Natural killer cell (primary cell): ENCODE measurements at regions of chr13 and their contacts with region 1.

Region 1: GRCh38 chr13:44435142-44435982 is 61.7 kb downstream of the SERP2 start:
- DNase-seq: peak; percentile 86 to 94
- ATAC-seq: peak; percentile 87 to 95 (median 89)
- H3K4me3 ChIP-seq: peak overlapping the region; percentile 75
- H3K4me3 Mint-ChIP-seq: peak overlapping the region; percentile 92
- H3K27ac ChIP-seq: peak overlapping the region; percentile 87
- H3K27ac Mint-ChIP-seq: peak overlapping the region; percentile 86 to 94
- H3K4me1 ChIP-seq: peaks cover 21% of the 10 kb centered on the region
- H3K4me1 Mint-ChIP-seq: peaks cover 33 to 35% of the 10 kb centered on the region in 2 donors
- H3K27me3 ChIP-seq: no peaks in the 10 kb centered on the region
- H3K27me3 Mint-ChIP-seq: no peaks in the 10 kb centered on the region
- CTCF ChIP-seq: no peak

Region 2: DNA sequence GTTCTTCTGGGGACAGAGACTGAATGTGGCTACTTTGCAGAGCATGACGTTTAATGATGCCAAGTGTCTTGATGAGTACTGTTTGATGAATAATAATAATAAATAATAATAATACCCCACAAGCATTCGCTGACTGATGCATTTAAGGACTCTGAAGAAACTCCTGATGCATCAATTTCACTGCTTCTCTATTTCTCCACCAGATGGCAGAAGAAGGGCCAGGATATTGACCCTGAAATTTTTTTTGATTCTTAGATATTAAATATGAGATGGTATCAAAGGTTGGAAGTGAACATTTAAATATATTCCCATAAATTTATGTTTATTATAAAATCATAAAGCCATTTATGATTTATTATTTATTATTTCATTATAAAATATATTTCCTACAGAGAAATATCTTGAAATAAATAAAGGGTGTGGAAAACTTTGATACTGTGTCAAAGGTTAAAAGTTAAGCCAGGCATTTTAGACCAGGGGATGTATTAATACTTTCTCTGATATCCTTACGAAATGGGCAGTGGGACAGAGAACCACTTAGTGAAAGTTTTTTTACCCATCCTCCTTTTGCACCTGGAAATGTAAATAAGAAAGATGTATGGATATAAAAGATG is 384.8 kb before region 1 on chr13:
- intact Hi-C with region 1: loop called (anchors 1 kb)
- DNase-seq: peak in 1 of 2 donors; percentile 65
- ATAC-seq: peak; percentile 49 to 73 (median 55)
- H3K4me3 ChIP-seq: no peak overlapping the region
- H3K4me3 Mint-ChIP-seq: no peak overlapping the region
- H3K27ac ChIP-seq: no peak overlapping the region
- H3K27ac Mint-ChIP-seq: no peak overlapping the region
- H3K4me1 ChIP-seq: no peaks in the 10 kb centered on the region
- H3K4me1 Mint-ChIP-seq: peaks cover 5% of the 10 kb centered on the region in 2 donors
- H3K27me3 ChIP-seq: no peaks in the 10 kb centered on the region
- H3K27me3 Mint-ChIP-seq: peaks cover 39 to 41% of the 10 kb centered on the region in 2 donors
- CTCF ChIP-seq: peak; percentile 83

Region 3: DNA sequence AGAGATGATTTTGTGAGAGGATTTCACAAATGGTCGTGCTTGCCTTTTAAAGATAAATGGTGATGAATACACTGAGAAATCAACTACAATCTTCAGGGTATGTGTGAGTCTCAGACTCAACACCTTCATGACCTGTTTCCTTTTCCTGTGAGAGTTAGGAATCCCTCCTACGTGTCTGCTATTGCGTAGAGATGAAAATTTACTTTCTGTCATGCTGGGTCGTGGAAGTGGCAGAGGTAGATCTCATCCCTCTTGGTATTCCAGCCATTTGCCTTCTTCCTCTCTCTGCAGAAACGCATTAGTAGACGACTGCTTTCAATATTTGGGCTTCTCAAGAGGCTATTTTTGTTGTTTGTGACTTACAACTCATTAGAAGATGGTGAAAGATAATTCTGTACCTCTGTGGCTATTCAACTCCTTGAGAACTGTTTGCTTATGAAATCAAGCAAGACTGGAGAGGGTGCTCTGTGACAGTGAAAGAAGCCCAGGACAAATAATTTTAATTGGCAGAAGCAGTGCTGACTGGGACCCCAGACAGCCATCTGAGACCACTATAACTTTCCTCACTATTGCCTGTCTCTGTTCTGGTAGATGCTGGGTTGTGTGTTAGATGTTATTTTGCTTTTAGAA is 322.5 kb before region 1 on chr13:
- intact Hi-C with region 1: loop called (anchors 2 kb)
- DNase-seq: peak; percentile 19 to 62
- ATAC-seq: peak; percentile 81 to 85 (median 83)
- H3K4me3 ChIP-seq: no peak overlapping the region
- H3K4me3 Mint-ChIP-seq: peak overlapping the region; percentile 74
- H3K27ac ChIP-seq: peak overlapping the region; percentile 92
- H3K27ac Mint-ChIP-seq: peak overlapping the region; percentile 90 to 93
- H3K4me1 ChIP-seq: peaks cover 29% of the 10 kb centered on the region
- H3K4me1 Mint-ChIP-seq: peaks cover 45 to 48% of the 10 kb centered on the region in 2 donors
- H3K27me3 ChIP-seq: no peaks in the 10 kb centered on the region
- H3K27me3 Mint-ChIP-seq: no peaks in the 10 kb centered on the region
- CTCF ChIP-seq: no peak

Region 4: GRCh38 chr13:44191504-44192171 is 243.7 kb before region 1 on chr13:
- intact Hi-C with region 1: loop called (anchors 1 kb)
- DNase-seq: peak in 1 of 2 donors; percentile 76
- ATAC-seq: peak; percentile 53 to 86 (median 77)
- H3K4me3 ChIP-seq: no peak overlapping the region
- H3K4me3 Mint-ChIP-seq: no peak overlapping the region
- H3K27ac ChIP-seq: no peak overlapping the region
- H3K27ac Mint-ChIP-seq: peak overlapping the region in 1 of 2 donors; percentile 23
- H3K4me1 ChIP-seq: peaks cover 7% of the 10 kb centered on the region
- H3K4me1 Mint-ChIP-seq: peaks cover 13 to 14% of the 10 kb centered on the region in 2 donors
- H3K27me3 ChIP-seq: no peaks in the 10 kb centered on the region
- H3K27me3 Mint-ChIP-seq: peaks cover 0 to 2% of the 10 kb centered on the region in 2 donors
- CTCF ChIP-seq: peak; percentile 49

Region 5: GRCh38 chr13:44259045-44260027 is 176.0 kb before region 1 on chr13:
- intact Hi-C with region 1: loop called (anchors 1 kb)
- DNase-seq: peak; percentile 52 to 65
- ATAC-seq: peak; percentile 84 to 86 (median 85)
- H3K4me3 ChIP-seq: no peak overlapping the region
- H3K4me3 Mint-ChIP-seq: peak overlapping the region; percentile 62
- H3K27ac ChIP-seq: peak overlapping the region; percentile 60
- H3K27ac Mint-ChIP-seq: peak overlapping the region; percentile 64 to 87
- H3K4me1 ChIP-seq: peaks cover 12% of the 10 kb centered on the region
- H3K4me1 Mint-ChIP-seq: peaks cover 13 to 20% of the 10 kb centered on the region in 2 donors
- H3K27me3 ChIP-seq: no peaks in the 10 kb centered on the region
- H3K27me3 Mint-ChIP-seq: no peaks in the 10 kb centered on the region
- CTCF ChIP-seq: no peak

Region 6: DNA sequence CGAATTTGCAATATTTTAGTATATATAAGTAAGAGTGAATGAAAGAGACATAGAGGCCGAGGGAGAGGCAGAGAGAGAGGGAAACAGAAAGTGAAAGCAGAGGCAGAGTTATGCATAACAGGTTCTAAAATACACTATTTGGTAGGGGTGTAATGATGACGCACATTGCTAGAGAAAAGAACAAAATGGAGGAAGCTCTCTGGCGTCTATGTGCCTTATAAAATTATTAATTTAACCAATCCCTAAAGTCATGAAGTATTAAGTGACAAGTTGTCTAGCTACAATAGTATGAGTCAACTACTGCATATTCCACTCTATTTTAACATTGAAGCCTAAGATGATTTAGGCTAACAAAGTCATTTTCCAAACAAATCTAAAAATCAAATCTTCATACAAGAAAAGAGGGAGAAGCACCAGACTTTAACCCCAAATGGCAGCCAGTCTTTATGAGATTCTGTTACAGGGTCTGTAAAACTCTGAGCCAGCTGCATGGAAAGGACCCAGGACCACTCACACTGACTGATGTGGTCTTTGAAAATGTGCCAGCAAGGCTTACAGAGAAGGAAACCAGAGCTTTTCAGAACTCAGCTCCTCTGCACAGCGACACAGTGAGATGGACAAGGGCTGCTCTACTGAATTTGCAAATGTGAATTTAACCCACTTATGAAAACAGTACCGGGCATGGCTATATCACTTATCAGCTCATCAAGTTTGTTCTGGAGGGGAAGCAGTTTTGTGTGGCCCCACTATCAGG is 160.7 kb before region 1 on chr13:
- intact Hi-C with region 1: loop called (anchors 1 kb)
- DNase-seq: peak; percentile 22 to 87
- ATAC-seq: peak; percentile 96 to 98 (median 96)
- H3K4me3 ChIP-seq: peak overlapping the region; percentile 36
- H3K4me3 Mint-ChIP-seq: peak overlapping the region; percentile 74
- H3K27ac ChIP-seq: peak overlapping the region; percentile 91
- H3K27ac Mint-ChIP-seq: peak overlapping the region; percentile 75 to 90
- H3K4me1 ChIP-seq: peaks cover 12% of the 10 kb centered on the region
- H3K4me1 Mint-ChIP-seq: peaks cover 17 to 22% of the 10 kb centered on the region in 2 donors
- H3K27me3 ChIP-seq: no peaks in the 10 kb centered on the region
- H3K27me3 Mint-ChIP-seq: peaks cover 7 to 14% of the 10 kb centered on the region in 2 donors
- CTCF ChIP-seq: no peak

Region 7: GRCh38 chr13:45895881-45896280 is 1460.5 kb after region 1 on chr13:
- intact Hi-C with region 1: no loop called
- DNase-seq: no peak
- ATAC-seq: no peak
- H3K4me3 ChIP-seq: no peak overlapping the region
- H3K4me3 Mint-ChIP-seq: no peak overlapping the region
- H3K27ac ChIP-seq: no peak overlapping the region
- H3K27ac Mint-ChIP-seq: no peak overlapping the region
- H3K4me1 ChIP-seq: no peaks in the 10 kb centered on the region
- H3K4me1 Mint-ChIP-seq: no peaks in the 10 kb centered on the region
- H3K27me3 ChIP-seq: no peaks in the 10 kb centered on the region
- H3K27me3 Mint-ChIP-seq: peaks cover 25 to 63% of the 10 kb centered on the region in 2 donors
- CTCF ChIP-seq: no peak